H1 (cell line): ENCODE measurements at regions of chr14 and their contacts with region 1.

Region 1: GRCh38 chr14:73785873-73786695 is 65.5 kb upstream of the PTGR2 start:
- DNase-seq: peak in 1 of 2 experiments; percentile 62
- H3K4me3 ChIP-seq: peak overlapping the region; percentile 42 to 75 (median 71)
- H3K27ac ChIP-seq: no peak overlapping the region
- H3K4me1 ChIP-seq: peaks cover 7 to 21% (median 13%) of the 10 kb centered on the region in 4 experiments; a peak in 6 of 7 replicates
- H3K27me3 ChIP-seq: peaks cover 20 to 78% (median 62%) of the 10 kb centered on the region in 4 experiments
- CTCF ChIP-seq: peak in 1 of 3 experiments; percentile 2; a peak in 1 of 4 replicates
- EP300 ChIP-seq: no peak
- POLR2A ChIP-seq: no peak
- RAD21 ChIP-seq: no peak

Region 2: GRCh38 chr14:73746520-73747378 is 39.3 kb before region 1 on chr14:
- CTCF ChIA-PET with region 1: interaction called, 12 read pairs
- POLR2A ChIA-PET with region 1: interaction called, 4 read pairs
- DNase-seq: no peak
- H3K4me3 ChIP-seq: no peak overlapping the region
- H3K27ac ChIP-seq: no peak overlapping the region
- H3K4me1 ChIP-seq: peaks cover 13 to 40% (median 26%) of the 10 kb centered on the region in 4 experiments
- H3K27me3 ChIP-seq: no peaks in the 10 kb centered on the region
- CTCF ChIP-seq: peak; percentile 42 to 60 (median 55)
- EP300 ChIP-seq: no peak
- POLR2A ChIP-seq: no peak
- RAD21 ChIP-seq: peak; percentile 57 to 68

Region 3: DNA sequence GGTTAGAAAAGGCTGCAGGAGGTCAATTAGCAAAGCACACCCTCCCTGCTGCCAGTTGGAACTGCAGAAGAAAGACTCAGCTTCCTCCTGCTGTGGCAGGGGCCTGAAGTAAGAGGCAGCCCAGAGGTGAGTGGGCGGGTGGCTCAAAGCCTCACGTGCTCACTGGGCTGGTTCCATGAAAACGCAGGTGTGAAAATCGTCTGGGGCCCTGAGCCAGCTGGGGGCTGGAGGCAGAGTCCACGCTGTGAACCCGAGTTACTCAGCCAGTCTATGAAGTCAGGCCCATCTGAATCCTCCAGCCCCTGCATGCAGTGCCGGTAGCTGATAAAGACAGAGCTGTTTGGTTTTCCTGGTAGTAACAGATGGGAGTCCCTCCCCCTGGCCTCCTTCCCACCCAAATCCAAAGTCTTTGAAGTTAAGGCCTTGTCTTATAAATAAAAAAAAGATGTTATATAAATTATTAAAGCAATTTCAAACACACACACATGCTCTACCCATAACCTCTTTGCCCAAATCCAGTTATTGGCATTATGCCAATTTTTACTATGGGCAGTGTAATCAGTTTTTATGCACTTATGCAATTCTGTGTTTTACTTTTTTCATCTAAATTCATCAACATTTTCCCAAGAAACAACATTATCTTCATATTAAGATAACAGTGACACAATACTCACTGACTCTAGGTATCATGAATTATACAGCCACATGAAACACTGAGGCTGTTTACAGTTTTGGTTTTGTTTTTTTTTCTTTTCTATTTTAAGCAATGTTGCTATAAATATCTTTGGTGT is 14.0 kb before region 1 on chr14:
- CTCF ChIA-PET with region 1: interaction called, 16 read pairs
- POLR2A ChIA-PET with region 1: interaction called, 42 read pairs
- DNase-seq: peak; percentile 43 to 71
- H3K4me3 ChIP-seq: peak overlapping the region in 1 of 4 experiments; percentile 4; a peak in 1 of 8 replicates
- H3K27ac ChIP-seq: no peak overlapping the region
- H3K4me1 ChIP-seq: peaks cover 5 to 22% (median 8%) of the 10 kb centered on the region in 4 experiments; a peak in 5 of 7 replicates
- H3K27me3 ChIP-seq: peaks cover 0 to 28% (median 12%) of the 10 kb centered on the region in 4 experiments; a peak in 4 of 7 replicates
- CTCF ChIP-seq: no peak
- EP300 ChIP-seq: no peak; a peak in 1 of 3 replicates
- POLR2A ChIP-seq: no peak
- RAD21 ChIP-seq: no peak